ENCODE measurements at regions of chr4 and their contacts with region 1.

Region 1: DNA sequence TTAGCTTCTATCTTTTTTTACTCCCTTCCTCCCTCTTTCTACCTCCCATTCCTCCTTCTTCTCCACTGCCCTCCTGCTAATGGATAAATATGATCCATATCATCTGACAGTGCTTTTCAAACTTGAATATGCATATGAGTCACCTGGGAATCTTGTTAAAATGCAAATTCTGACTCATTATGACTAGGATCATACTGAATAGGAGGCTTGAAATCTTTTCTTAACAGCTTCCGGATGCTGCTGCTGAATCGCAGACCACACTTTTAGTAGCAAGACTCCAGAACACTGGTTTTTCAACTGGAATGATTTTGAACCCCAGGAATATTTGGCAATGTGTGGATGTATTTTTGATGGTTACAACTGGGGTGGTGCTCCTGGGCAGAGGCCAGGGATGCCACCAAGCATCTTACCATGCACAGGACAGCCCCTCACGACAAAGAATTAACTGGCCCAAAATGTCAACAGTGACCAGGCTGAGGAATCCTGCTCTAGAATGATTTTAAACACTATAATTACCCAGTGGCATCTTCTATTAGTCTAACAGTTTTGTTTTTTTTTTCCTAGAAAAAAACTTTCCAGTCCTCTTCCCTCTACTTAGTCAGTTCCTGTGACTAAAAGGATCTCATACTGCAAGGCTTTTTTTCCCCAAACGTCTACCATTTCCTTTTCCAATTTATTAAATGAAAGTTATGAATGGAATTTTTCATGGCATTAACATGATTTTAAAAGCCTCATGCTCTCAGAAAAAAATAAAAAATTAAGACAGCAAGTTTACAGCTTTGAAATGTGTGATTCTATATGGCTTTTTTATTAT is 10.6 kb upstream of the PYURF start:
- DNase-seq: no peak
- H3K4me3 Mint-ChIP-seq: no peak overlapping the region
- H3K27ac Mint-ChIP-seq: no peak overlapping the region
- H3K4me1 Mint-ChIP-seq: peaks cover 27% of the 10 kb centered on the region
- H3K27me3 Mint-ChIP-seq: no peaks in the 10 kb centered on the region

Region 2: GRCh38 chr4:87838217-87838616 is 695.9 kb before region 1 on chr4:
- CTCF ChIA-PET with region 1: no interaction called
- intact Hi-C with region 1: no loop called
- DNase-seq: no peak
- H3K4me3 Mint-ChIP-seq: no peak overlapping the region
- H3K27ac Mint-ChIP-seq: no peak overlapping the region
- H3K4me1 Mint-ChIP-seq: no peaks in the 10 kb centered on the region
- H3K27me3 Mint-ChIP-seq: peaks cover 14% of the 10 kb centered on the region

Region 3: DNA sequence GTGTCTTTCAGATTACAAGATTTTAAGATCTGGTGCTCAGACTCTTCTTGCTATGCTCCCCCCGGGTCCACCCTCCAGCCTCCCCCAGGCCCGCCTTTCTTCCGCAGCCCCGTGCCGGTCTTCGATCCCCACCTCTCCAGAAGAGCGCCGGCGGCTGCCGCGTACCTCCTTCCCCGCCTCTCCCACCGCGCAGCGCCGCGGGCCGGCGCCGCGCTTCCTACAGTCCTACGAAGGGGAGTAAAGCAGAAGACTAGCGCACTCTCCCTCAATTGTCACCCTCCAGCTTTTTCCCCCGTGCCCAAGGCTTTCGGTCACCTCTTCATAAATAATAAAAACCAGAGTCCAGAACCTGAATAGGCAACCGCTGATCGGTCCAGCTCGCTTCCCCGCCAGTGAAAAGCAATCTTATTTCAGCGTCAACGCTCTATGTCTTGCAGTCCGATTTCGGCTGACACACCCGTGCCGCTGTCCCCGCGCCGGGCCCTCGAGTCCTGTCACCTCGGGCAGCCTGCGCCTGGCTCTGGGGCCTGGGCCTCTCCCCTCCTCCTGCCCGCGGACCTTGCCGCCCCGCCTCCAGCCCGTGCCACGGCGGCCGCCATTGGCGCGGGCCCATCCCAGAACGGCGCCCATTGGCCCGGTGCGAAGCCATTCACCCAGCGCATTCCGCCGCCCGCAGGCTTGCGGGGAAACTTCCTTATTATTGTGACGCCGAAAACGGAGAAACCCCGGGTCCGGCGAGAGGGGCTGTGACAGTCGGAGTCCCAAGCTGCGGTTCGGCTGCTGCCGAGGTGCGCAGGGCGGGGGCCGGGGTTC is 57.8 kb after region 1 on chr4 and contains the start of gene HERC3:
- CTCF ChIA-PET with region 1: interaction called, 19 read pairs
- intact Hi-C with region 1: loop called (anchors 1 kb)
- DNase-seq: peak; percentile 90
- H3K4me3 Mint-ChIP-seq: peak within 1 kb of the TSS; percentile 98
- H3K27ac Mint-ChIP-seq: peak within 1 kb of the TSS; percentile 83
- H3K4me1 Mint-ChIP-seq: peaks cover 41% of the 10 kb centered on the region
- H3K27me3 Mint-ChIP-seq: no peaks in the 10 kb centered on the region
- total RNA-seq, gene HERC3: 24.4 to 25.8 TPM

Region 4: DNA sequence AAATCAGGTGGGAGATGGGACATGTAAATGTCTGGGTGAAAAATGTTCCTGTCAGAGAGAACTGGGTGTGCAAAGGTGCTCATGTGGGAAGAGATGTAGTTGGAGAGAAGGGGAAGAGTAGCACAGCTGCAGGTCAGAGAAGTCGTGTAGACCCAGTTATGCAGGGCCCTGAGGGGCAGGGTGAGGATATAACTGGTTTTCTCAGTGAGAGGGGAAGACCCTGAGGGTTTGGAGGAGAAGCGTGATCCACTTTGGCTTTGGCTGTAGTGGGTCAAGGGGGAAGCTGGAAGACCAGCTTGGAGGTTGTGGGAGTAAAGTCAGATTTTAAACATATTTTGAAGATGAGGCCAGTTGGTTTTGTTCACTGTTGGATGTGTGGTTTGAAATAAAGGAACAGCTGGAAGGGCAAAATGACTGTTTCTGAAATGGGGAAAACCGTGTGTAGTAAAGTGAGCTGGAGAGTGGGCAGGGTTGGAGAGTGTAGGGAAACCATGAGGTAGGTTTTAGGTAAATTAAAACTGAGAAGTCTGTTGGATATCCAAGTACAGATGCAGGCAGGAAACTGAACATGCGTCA is 119.3 kb after region 1 on chr4:
- CTCF ChIA-PET with region 1: interaction called, 14 read pairs
- intact Hi-C with region 1: no loop called
- DNase-seq: no peak
- H3K4me3 Mint-ChIP-seq: no peak overlapping the region
- H3K27ac Mint-ChIP-seq: no peak overlapping the region
- H3K4me1 Mint-ChIP-seq: peaks cover 31% of the 10 kb centered on the region
- H3K27me3 Mint-ChIP-seq: no peaks in the 10 kb centered on the region

Region 5: GRCh38 chr4:88672987-88673386 is 138.8 kb after region 1 on chr4:
- CTCF ChIA-PET with region 1: interaction called, 12 read pairs
- intact Hi-C with region 1: no loop called
- DNase-seq: peak; percentile 62
- H3K4me3 Mint-ChIP-seq: no peak overlapping the region
- H3K27ac Mint-ChIP-seq: no peak overlapping the region
- H3K4me1 Mint-ChIP-seq: peaks cover 6% of the 10 kb centered on the region
- H3K27me3 Mint-ChIP-seq: no peaks in the 10 kb centered on the region

Region 6: DNA sequence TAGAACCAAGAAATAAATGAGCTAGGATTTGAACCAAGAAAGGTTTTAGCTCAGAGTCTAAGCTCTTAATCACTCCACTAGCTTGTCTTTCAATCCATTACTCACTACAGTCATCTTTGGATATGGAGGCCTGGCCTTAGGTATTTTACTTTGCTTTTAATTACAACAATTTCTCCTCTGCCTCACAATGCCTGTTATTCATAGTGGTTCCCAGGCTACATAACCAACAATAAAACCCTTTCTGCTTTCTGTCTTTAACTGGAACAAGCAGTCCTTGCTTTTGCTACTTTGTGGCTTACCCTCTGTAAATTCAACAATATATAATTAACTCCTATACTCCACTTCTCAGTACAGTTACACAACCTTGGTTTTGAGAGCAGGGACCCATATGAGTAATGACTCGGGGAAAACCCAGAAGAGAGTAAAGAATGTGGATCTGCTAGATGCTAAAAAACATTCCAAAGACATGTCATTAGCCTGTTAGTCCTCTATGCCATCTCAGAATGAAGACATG is 258.2 kb after region 1 on chr4:
- CTCF ChIA-PET with region 1: interaction called, 4 read pairs
- intact Hi-C with region 1: loop called (anchors 1 kb)
- DNase-seq: peak; percentile 23
- H3K4me3 Mint-ChIP-seq: no peak overlapping the region
- H3K27ac Mint-ChIP-seq: peak overlapping the region; percentile 25
- H3K4me1 Mint-ChIP-seq: peaks cover 19% of the 10 kb centered on the region
- H3K27me3 Mint-ChIP-seq: no peaks in the 10 kb centered on the region

Region 7: DNA sequence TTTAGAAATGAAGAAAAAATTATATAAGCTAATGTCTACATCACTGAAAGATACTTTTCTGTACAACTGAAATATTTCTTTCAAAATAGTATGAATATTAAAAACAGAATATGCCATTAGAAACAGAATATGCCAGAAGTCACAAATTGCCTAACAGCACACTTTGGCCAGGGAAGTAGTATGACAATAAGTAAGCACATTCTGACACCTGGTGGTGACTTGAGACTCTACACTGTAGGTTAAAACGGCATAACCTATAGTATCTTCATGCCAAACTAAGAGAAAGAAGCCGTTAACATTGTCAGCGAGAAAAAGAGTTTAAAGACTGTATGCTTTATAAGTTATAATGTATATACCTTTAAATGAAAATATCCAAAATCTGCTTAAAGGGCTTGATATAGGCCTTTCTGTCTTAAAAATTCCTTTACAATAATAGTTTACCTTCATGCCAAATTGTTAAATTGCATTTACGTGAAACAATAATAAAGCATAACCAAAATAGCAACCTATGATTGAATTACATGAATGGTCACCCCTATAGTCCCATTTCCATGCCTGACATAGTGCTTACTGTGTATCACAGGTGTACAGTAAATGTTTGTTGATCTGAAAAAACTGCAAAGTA is 490.0 kb after region 1 on chr4:
- CTCF ChIA-PET with region 1: interaction called, 28 read pairs
- intact Hi-C with region 1: loop called (anchors 1 kb)
- DNase-seq: peak; percentile 71
- H3K4me3 Mint-ChIP-seq: no peak overlapping the region
- H3K27ac Mint-ChIP-seq: no peak overlapping the region
- H3K4me1 Mint-ChIP-seq: peaks cover 4% of the 10 kb centered on the region
- H3K27me3 Mint-ChIP-seq: no peaks in the 10 kb centered on the region